RWPE1 (cell line): ENCODE measurements at regions of chr2 and their contacts with region 1.

Region 1: DNA sequence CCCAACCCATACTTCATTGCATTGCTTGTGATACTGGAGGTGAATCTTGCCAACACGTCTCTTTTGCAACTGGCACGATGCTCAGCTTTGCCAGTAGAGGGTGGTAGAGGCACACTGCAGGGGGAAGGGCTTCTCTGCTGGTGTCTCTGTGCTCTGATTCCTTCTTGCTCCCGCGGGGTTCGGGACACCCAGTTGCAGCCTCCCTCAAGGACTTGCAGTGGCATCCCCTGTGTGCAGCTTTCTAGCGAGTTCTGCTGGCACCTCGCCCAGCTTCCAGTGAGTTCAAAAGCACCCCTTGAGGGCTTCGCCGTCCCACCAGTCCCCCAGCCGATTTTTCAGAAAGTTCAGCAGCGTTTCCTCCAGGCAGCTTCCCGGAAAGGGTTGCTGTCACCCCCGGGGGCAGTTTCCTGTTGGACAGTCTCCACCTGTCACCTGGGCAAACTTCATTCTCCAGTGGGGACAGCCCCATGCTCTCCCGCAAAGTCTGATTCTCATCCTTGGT is 35.3 kb upstream of the EN1 start:
- DNase-seq: peak; percentile 57
- H3K27ac ChIP-seq: no peak overlapping the region
- CTCF ChIP-seq: peak; percentile 57

Region 2: DNA sequence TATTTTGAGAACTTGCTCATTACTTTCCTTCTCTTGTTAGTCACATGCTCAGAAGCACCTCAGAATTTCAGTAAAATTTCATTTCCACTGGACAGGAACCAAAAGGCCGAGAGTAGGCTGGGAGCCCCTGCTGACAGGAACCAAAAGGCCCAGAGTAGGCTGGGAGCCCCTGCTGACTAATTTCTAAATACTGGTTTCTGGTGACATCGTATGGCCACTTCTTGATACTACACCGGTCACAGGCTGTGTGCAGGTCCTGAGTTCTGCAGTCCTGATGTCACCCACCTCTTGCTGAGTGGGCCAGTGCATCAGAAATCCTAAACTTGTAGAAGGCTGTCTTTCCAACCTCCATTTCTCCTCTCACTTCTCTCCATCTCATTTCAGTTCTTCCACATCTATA is 17.7 kb before region 1 on chr2:
- CTCF ChIA-PET with region 1: interaction called, 11 read pairs
- POLR2A ChIA-PET with region 1: no interaction called
- DNase-seq: peak; percentile 59
- H3K27ac ChIP-seq: no peak overlapping the region
- CTCF ChIP-seq: peak; percentile 65

Region 3: GRCh38 chr2:119242276-119243119 is 359.7 kb after region 1 on chr2:
- CTCF ChIA-PET with region 1: no interaction called
- POLR2A ChIA-PET with region 1: no interaction called
- DNase-seq: no peak
- H3K27ac ChIP-seq: peak overlapping the region; percentile 89
- CTCF ChIP-seq: no peak

Region 4: DNA sequence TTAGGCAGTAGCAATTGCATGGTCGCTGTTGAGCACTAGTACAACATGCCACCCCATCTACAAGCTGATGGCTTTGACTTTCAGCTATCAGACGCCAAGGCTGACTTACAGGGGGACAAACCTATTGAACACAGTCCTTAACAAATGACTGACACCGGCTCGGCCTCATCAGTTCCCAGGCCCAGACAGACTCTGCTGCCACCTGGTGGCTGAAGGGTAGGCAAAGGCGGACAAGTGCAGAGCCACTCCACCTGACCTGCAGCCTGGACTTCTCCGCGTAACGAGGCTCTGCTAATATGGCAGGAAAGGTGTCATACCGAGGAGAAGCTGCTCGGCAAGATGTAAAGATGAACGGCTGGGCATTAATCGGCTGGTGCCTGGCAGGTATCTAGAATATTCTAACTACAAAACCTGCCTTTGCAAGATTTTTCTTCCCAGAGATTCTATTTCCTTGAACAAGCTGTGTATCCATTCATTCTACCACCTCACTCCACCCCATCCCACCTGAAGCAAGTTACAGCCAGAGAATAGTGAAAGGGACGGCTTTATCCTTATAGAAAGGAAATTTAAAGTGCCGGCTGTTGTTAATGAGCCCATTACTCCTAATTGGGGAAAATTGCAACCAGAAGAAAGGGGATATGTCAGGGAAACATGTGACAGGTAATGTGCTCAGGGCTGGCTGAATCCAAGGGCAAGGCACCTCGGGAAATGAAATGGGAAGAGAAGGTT is 408.3 kb after region 1 on chr2:
- CTCF ChIA-PET with region 1: interaction called, 27 read pairs
- POLR2A ChIA-PET with region 1: no interaction called
- DNase-seq: peak; percentile 84
- H3K27ac ChIP-seq: no peak overlapping the region
- CTCF ChIP-seq: peak; percentile 93